PC-3 (cell line): ENCODE measurements at regions of chr6 and their contacts with region 1.

Region 1: DNA sequence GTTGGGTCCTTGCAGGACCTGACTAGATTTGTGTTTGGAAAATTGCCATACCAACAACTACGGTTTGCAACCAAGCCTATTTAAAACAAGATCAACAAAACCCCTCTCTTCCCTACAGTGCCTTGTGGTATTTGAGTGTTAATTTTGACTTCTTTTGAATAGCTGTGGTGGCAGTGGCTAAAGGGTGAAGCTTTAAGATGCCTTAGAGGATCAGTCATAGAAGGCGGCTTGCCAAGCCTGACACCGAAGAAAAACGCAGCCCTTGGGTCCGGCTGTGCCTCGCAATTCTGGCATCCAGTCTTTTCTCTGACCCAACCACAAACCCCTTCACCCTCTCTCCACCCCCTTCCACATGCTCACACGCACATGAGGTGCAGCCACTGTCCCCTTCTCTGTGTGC is 32.6 kb downstream of the BMP6 start:
- DNase-seq: peak; percentile 91
- ATAC-seq: peak; percentile 73
- H3K4me3 ChIP-seq: no peak overlapping the region
- H3K27ac ChIP-seq: no peak overlapping the region
- H3K4me1 ChIP-seq: peaks cover 24% of the 10 kb centered on the region
- H3K27me3 ChIP-seq: no peaks in the 10 kb centered on the region
- CTCF ChIP-seq: no peak

Region 2: DNA sequence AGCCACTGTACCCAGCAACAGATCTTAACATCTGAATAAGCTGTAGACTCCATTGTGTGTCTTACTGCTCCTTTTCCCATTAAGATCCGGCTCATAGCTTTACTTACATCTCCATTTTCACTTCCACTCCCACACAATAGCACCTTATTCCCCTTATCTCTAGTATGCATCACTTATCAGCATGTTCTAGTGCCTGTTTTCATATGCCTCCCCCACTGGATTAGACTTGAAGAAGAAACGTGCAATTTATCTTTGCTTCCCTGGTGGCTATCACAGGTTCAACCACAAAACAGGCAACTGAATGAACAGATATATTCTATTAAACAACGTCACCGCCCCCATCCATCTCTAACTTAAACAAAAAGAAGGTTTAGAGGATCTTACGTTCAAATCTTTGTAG is 457.5 kb before region 1 on chr6:
- CTCF ChIA-PET with region 1: interaction called, 13 read pairs
- POLR2A ChIA-PET with region 1: no interaction called
- intact Hi-C with region 1: no loop called
- DNase-seq: no peak
- ATAC-seq: no peak
- H3K4me3 ChIP-seq: no peak overlapping the region
- H3K27ac ChIP-seq: no peak overlapping the region
- H3K4me1 ChIP-seq: no peaks in the 10 kb centered on the region
- H3K27me3 ChIP-seq: no peaks in the 10 kb centered on the region
- CTCF ChIP-seq: no peak

Region 3: GRCh38 chr6:8043221-8043620 is 284.8 kb after region 1 on chr6:
- CTCF ChIA-PET with region 1: no interaction called
- POLR2A ChIA-PET with region 1: interaction called, 33 read pairs
- intact Hi-C with region 1: no loop called
- DNase-seq: no peak
- ATAC-seq: no peak
- H3K4me3 ChIP-seq: no peak overlapping the region
- H3K27ac ChIP-seq: no peak overlapping the region
- H3K4me1 ChIP-seq: peaks cover 14% of the 10 kb centered on the region
- H3K27me3 ChIP-seq: no peaks in the 10 kb centered on the region
- CTCF ChIP-seq: no peak

Region 4: DNA sequence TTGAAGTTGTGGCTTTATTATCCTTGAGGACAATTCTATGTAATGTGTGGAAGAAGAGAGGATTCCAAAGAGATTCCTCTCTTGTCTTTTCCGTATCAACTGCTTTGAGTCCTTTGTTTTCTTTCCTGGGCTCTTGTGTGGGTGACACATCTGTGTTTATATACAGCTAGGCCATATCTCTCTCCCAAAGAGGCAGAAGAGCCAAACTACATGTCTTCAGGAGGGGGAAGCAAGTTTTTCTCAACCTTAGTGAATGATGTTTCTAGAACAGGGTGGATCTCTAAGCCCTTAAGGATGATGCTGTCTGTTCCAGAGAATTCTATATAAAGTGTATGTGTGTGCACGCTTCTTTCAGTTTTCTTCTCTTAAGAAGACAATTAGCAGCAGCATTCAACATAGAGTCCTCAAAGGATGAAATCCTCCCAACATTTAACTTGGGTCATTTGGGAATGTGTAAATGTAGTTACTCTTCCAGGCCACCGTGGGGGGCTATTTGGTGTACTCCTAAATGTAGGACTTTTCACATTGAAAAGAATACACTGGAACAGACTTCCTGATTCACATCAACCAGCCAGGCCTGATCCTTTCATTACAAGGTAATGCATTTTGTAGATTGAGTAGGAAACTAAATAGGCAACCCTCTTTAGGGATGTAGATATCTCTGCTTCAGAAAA is 436.7 kb after region 1 on chr6:
- CTCF ChIA-PET with region 1: no interaction called
- POLR2A ChIA-PET with region 1: no interaction called
- intact Hi-C with region 1: no loop called
- DNase-seq: no peak
- ATAC-seq: no peak
- H3K4me3 ChIP-seq: no peak overlapping the region
- H3K27ac ChIP-seq: no peak overlapping the region
- H3K4me1 ChIP-seq: no peaks in the 10 kb centered on the region
- H3K27me3 ChIP-seq: peaks cover 53% of the 10 kb centered on the region
- CTCF ChIP-seq: peak; percentile 42; the same call in 1 of the 2 replicates